ENCODE measurements at regions of chr5 and their contacts with region 1.

Region 1: GRCh38 chr5:148820461-148821395 is 5.7 kb upstream of the ADRB2 start:
- DNase-seq: no peak
- H3K4me3 ChIP-seq: no peak overlapping the region
- H3K27ac ChIP-seq: no peak overlapping the region
- H3K27me3 ChIP-seq: no peaks in the 10 kb centered on the region
- CTCF ChIP-seq: peak; percentile 68

Region 2: DNA sequence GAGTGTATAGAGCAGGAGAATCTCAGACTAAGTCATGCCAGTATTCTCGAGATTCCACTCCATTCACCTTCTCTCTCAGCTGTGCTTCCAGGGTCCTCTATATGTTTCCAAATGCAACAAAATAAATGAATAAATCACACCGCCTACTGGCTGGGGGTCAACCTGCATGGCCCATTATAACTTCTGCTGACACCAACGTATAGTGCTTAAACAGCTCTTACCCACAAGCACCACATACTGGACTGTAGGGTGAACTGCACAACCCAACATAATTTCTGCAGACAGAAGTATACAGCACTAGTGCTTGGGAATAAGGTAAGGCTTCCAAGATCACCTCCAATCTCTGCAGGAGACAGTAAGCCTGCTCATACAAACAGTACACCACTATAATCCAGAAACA is 133.3 kb before region 1 on chr5:
- CTCF ChIA-PET with region 1: no interaction called
- POLR2A ChIA-PET with region 1: no interaction called
- DNase-seq: no peak
- H3K4me3 ChIP-seq: no peak overlapping the region
- H3K27ac ChIP-seq: no peak overlapping the region
- H3K27me3 ChIP-seq: no peaks in the 10 kb centered on the region
- CTCF ChIP-seq: peak; percentile 36; the same call in 1 of the 2 replicates

Region 3: GRCh38 chr5:148805326-148806290 is 15.1 kb before region 1 on chr5:
- CTCF ChIA-PET with region 1: interaction called, 20 read pairs
- POLR2A ChIA-PET with region 1: no interaction called
- DNase-seq: no peak
- H3K4me3 ChIP-seq: no peak overlapping the region
- H3K27ac ChIP-seq: no peak overlapping the region
- H3K27me3 ChIP-seq: no peaks in the 10 kb centered on the region
- CTCF ChIP-seq: no peak

Region 4: DNA sequence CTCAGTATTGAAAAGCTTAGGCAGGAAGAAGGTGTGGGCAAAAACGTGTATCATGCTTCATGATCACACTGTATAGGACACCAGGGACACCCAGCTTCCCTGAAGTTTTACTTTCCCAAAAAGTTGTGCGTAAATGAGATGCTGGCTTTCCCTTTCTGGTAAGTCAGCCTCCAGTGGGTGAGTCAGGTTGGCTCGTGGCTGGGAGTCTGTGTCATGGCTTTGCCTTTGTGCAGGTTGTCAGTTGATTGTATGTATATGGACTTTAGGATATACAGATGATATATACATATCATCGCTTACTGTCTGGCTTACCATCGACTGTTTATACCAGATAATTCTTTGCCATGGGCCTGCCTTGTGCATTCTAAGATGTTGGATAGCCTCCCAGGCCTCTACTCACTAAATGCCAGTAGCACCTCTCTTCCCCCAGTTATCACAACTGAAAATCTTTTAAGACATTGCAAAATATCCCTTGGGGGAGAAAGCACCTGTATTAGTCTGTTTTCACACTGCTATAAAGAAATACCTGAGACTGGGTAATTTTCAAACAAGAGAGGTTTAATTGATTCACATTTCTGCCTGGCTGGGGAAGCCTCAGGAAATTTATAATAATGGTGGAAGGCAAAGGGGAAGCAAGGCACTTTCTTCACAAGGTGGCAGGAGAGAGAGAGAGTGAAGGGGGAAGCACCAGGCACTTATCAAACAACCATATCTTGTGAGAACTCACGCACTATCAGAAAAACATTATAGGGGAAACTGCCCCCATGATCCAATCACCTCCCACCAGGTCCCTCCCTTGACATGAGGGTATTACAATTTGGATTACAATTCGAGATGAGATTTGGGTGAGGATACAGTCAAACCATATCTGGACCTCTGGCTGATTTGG is 40.1 kb after region 1 on chr5:
- CTCF ChIA-PET with region 1: interaction called, 10 read pairs
- POLR2A ChIA-PET with region 1: no interaction called
- DNase-seq: no peak
- H3K4me3 ChIP-seq: no peak overlapping the region
- H3K27ac ChIP-seq: no peak overlapping the region
- H3K27me3 ChIP-seq: no peaks in the 10 kb centered on the region
- CTCF ChIP-seq: no peak

Region 5: GRCh38 chr5:148998174-148998797 is 177.6 kb after region 1 on chr5:
- CTCF ChIA-PET with region 1: interaction called, 10 read pairs
- POLR2A ChIA-PET with region 1: no interaction called
- DNase-seq: no peak
- H3K4me3 ChIP-seq: no peak overlapping the region
- H3K27ac ChIP-seq: no peak overlapping the region
- H3K27me3 ChIP-seq: no peaks in the 10 kb centered on the region
- CTCF ChIP-seq: peak; percentile 69

Region 6: DNA sequence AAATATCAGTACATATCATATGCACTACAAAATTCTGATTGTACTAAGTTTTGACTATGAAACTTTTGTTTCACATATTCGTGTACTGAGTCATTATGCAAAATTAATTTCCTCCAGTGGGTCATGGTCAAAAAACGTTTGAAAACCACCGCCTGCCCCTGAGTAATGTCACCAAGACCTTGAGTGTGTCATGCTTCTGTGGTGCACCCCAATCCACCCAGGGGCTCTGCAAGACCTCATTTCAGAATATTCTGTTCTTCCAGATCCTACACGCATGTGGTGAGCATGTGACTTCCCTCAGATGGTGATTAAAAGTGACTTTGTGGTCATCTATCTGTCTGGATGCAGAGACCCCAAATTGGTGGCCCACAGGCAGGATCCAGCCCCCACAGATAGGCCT is 351.5 kb after region 1 on chr5:
- CTCF ChIA-PET with region 1: no interaction called
- POLR2A ChIA-PET with region 1: no interaction called
- DNase-seq: peak; percentile 26
- H3K4me3 ChIP-seq: no peak overlapping the region
- H3K27ac ChIP-seq: peak overlapping the region; percentile 55
- H3K27me3 ChIP-seq: no peaks in the 10 kb centered on the region
- CTCF ChIP-seq: no peak